ENCODE measurements at regions of chr14 and their contacts with region 1.

Region 1: GRCh38 chr14:20413045-20413799 is at the start of gene TEP1:
- DNase-seq: peak; percentile 28
- H3K4me3 ChIP-seq: peak within 1 kb of the TSS; percentile 92
- CTCF ChIP-seq: no peak

Region 2: GRCh38 chr14:20350860-20351259 is 62.4 kb before region 1 on chr14:
- in situ Hi-C with region 1: loop called (anchors 5 kb)
- DNase-seq: no peak
- H3K4me3 ChIP-seq: no peak overlapping the region
- CTCF ChIP-seq: peak; percentile 30

Region 3: GRCh38 chr14:20530771-20531571 is 117.7 kb after region 1 on chr14:
- in situ Hi-C with region 1: no loop called
- DNase-seq: peak; percentile 41
- H3K4me3 ChIP-seq: no peak overlapping the region
- CTCF ChIP-seq: peak; percentile 71

Region 4: GRCh38 chr14:20734430-20734806 is 321.2 kb after region 1 on chr14:
- in situ Hi-C with region 1: no loop called
- DNase-seq: no peak
- H3K4me3 ChIP-seq: no peak overlapping the region
- CTCF ChIP-seq: no peak

Measured in astrocyte of the cerebellum (primary cell).